HCT116 (cell line): ENCODE measurements at regions of chr1 and their contacts with region 1.

Region 1: GRCh38 chr1:116570358-116571200 is at the start of gene CD58:
- DNase-seq: peak; percentile 57
- ATAC-seq: peak; percentile 90
- H3K4me3 ChIP-seq: peak within 1 kb of the TSS; percentile 75 to 88
- H3K27ac ChIP-seq: peak within 1 kb of the TSS; percentile 93
- H3K4me1 ChIP-seq: peaks cover 21 to 40% of the 10 kb centered on the region in 2 experiments
- H3K27me3 ChIP-seq: no peaks in the 10 kb centered on the region
- CTCF ChIP-seq: peak; percentile 45 to 65 (median 55); a peak in 5 of 6 replicates
- POLR2A ChIP-seq: peak; percentile 24
- RAD21 ChIP-seq: peak; percentile 49
- total RNA-seq, gene CD58: 18.0 TPM

Region 2: GRCh38 chr1:116139592-116140134 is 430.9 kb before region 1 on chr1:
- CTCF ChIA-PET with region 1: interaction called, 5 read pairs
- POLR2A ChIA-PET with region 1: no interaction called
- RAD21 ChIA-PET with region 1: interaction called in 1 of 2 experiments, 3 read pairs
- intact Hi-C with region 1: loop called (anchors 2 kb)
- DNase-seq: no peak
- ATAC-seq: no peak
- H3K4me3 ChIP-seq: no peak overlapping the region
- H3K27ac ChIP-seq: no peak overlapping the region
- H3K4me1 ChIP-seq: peaks cover 2 to 8% of the 10 kb centered on the region in 2 experiments; a peak in 2 of 4 replicates
- H3K27me3 ChIP-seq: no peaks in the 10 kb centered on the region
- CTCF ChIP-seq: no peak
- POLR2A ChIP-seq: no peak
- RAD21 ChIP-seq: no peak

Region 3: DNA sequence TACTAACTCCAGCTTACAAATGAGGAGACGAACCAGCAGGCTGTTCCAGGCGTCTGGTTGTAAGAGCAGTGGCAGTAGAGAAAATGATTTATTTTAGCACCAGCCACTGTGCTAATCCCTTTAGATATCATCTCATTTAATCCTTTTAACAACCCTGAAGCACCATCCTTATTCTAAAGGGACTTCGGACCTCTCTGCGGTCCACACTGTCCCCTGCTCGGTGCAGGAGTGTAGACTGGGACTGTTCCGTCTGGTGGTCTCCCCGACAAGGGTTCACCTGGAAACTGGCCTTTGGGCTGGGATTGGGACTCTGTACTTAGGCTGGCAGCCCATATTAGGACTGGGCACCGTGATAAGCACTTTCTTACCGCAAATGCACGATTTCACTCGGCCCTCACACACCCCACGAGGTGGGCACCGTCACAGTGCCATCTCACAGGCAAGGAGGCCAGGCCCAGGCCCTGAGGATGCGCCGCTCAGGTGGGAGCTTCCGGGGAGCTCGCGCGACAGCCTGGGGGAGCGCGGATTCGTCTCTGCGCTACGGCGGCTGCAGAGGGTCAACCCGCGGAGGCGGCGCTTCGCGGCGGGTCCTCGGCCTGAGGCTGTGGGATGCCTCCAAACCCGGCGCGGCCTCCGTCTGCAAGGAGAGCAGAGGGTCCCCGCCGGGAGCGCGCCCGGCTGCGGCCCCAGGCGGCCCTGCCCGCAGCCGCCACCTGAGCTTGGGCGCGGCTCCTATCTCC is 152.3 kb before region 1 on chr1:
- CTCF ChIA-PET with region 1: no interaction called
- POLR2A ChIA-PET with region 1: no interaction called
- RAD21 ChIA-PET with region 1: no interaction called
- intact Hi-C with region 1: no loop called
- DNase-seq: peak; percentile 68
- ATAC-seq: peak; percentile 93
- H3K4me3 ChIP-seq: peak overlapping the region; percentile 88 to 89
- H3K27ac ChIP-seq: peak overlapping the region; percentile 38
- H3K4me1 ChIP-seq: peaks cover 8 to 28% of the 10 kb centered on the region in 2 experiments; a peak in 3 of 4 replicates
- H3K27me3 ChIP-seq: no peaks in the 10 kb centered on the region
- CTCF ChIP-seq: no peak
- POLR2A ChIP-seq: peak; percentile 9
- RAD21 ChIP-seq: no peak

Region 4: GRCh38 chr1:116504308-116505156 is 66.0 kb before region 1 on chr1:
- CTCF ChIA-PET with region 1: no interaction called
- POLR2A ChIA-PET with region 1: no interaction called
- RAD21 ChIA-PET with region 1: no interaction called
- intact Hi-C with region 1: loop called (anchors 5 kb)
- DNase-seq: no peak
- ATAC-seq: peak; percentile 35
- H3K4me3 ChIP-seq: no peak overlapping the region
- H3K27ac ChIP-seq: peak overlapping the region; percentile 28
- H3K4me1 ChIP-seq: peaks cover 51 to 59% of the 10 kb centered on the region in 2 experiments
- H3K27me3 ChIP-seq: no peaks in the 10 kb centered on the region
- CTCF ChIP-seq: no peak
- POLR2A ChIP-seq: no peak
- RAD21 ChIP-seq: no peak

Region 5: DNA sequence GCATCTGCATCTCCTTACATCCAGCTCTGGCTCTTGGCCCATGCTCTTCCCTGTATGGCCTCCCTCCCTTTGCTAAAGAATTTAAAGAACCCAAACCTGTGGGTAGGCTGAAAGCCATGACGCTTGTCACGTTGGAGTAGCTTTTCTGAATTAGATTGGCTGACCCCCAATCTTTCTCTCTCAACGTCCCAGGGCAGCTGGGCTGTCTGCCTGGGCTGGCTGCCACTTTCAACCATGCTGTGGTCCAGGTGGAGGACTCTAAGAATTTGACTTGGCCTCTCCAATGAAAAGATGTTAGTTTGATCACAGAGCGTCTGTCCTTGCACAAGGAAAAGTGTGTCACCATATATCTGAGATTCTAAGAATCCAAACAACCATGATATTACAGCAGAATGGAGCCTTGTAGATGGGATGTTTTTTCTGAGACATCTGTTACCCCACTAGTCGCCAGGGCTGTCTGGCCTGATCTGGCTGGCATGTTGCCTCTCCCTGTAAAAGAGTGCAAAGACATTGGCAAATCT is 103.5 kb after region 1 on chr1:
- CTCF ChIA-PET with region 1: interaction called, 17 read pairs
- POLR2A ChIA-PET with region 1: no interaction called
- RAD21 ChIA-PET with region 1: no interaction called
- intact Hi-C with region 1: loop called (anchors 1 kb)
- DNase-seq: no peak
- ATAC-seq: no peak
- H3K4me3 ChIP-seq: no peak overlapping the region
- H3K27ac ChIP-seq: no peak overlapping the region
- H3K4me1 ChIP-seq: peaks cover 0 to 5% of the 10 kb centered on the region in 2 experiments; a peak in 1 of 4 replicates
- H3K27me3 ChIP-seq: no peaks in the 10 kb centered on the region
- CTCF ChIP-seq: no peak
- POLR2A ChIP-seq: no peak
- RAD21 ChIP-seq: no peak

Region 6: GRCh38 chr1:116724765-116725375 is 154.3 kb after region 1 on chr1:
- CTCF ChIA-PET with region 1: no interaction called
- POLR2A ChIA-PET with region 1: no interaction called
- RAD21 ChIA-PET with region 1: no interaction called
- intact Hi-C with region 1: loop called (anchors 10 kb)
- DNase-seq: peak; percentile 38
- ATAC-seq: peak; percentile 83
- H3K4me3 ChIP-seq: no peak overlapping the region
- H3K27ac ChIP-seq: no peak overlapping the region
- H3K4me1 ChIP-seq: no peaks in the 10 kb centered on the region
- H3K27me3 ChIP-seq: 0 out of 2 replicates have a peak, but pooled peaks cover 3% of the 10 kb centered on the region
- CTCF ChIP-seq: peak; percentile 50 to 89 (median 68); a peak in 5 of 6 replicates
- POLR2A ChIP-seq: no peak
- RAD21 ChIP-seq: peak; percentile 63

Region 7: DNA sequence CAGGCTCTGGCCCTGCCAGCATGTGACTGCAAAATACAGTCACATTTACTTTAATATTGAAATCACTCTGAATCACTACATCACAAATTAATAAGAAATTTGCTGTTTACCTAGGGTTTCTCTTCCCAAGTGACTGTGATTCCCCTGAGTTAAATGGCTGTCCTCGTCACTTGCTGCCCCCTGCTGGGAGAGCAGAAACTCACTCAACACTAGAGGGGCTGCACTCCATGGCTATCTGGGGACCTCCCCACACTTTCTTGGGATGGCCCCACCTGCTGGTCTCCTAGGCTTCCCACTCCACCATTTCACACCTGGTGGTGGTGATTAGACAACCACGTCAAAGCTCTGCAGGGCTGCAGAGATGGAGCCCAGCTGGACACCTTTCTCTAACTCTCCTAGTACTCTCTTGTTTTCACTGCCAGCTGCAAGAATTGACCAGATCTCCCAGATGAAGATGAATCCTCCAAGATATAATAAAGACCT is 247.0 kb after region 1 on chr1:
- CTCF ChIA-PET with region 1: interaction called, 5 read pairs
- POLR2A ChIA-PET with region 1: no interaction called
- RAD21 ChIA-PET with region 1: no interaction called
- intact Hi-C with region 1: loop called (anchors 1 kb)
- DNase-seq: peak; percentile 75
- ATAC-seq: peak; percentile 100
- H3K4me3 ChIP-seq: no peak overlapping the region
- H3K27ac ChIP-seq: no peak overlapping the region
- H3K4me1 ChIP-seq: no peaks in the 10 kb centered on the region
- H3K27me3 ChIP-seq: no peaks in the 10 kb centered on the region
- CTCF ChIP-seq: peak; percentile 77 to 98 (median 85)
- POLR2A ChIP-seq: no peak
- RAD21 ChIP-seq: peak; percentile 80